ENCODE measurements at regions of chr16 and their contacts with region 1.

Region 1: GRCh38 chr16:53130159-53131049 is 75.6 kb downstream of the CHD9 start:
- DNase-seq: peak; percentile 99
- H3K4me3 ChIP-seq: peak overlapping the region; percentile 68 to 83
- H3K27ac ChIP-seq: peak overlapping the region; percentile 86 to 91
- H3K4me1 ChIP-seq: peaks cover 9 to 14% of the 10 kb centered on the region in 2 experiments; a peak in 3 of 4 replicates
- H3K27me3 ChIP-seq: no peaks in the 10 kb centered on the region
- CTCF ChIP-seq: no peak; the same call in 1 of the 2 replicates
- EP300 ChIP-seq: no peak
- RAD21 ChIP-seq: peak; percentile 70

Region 2: DNA sequence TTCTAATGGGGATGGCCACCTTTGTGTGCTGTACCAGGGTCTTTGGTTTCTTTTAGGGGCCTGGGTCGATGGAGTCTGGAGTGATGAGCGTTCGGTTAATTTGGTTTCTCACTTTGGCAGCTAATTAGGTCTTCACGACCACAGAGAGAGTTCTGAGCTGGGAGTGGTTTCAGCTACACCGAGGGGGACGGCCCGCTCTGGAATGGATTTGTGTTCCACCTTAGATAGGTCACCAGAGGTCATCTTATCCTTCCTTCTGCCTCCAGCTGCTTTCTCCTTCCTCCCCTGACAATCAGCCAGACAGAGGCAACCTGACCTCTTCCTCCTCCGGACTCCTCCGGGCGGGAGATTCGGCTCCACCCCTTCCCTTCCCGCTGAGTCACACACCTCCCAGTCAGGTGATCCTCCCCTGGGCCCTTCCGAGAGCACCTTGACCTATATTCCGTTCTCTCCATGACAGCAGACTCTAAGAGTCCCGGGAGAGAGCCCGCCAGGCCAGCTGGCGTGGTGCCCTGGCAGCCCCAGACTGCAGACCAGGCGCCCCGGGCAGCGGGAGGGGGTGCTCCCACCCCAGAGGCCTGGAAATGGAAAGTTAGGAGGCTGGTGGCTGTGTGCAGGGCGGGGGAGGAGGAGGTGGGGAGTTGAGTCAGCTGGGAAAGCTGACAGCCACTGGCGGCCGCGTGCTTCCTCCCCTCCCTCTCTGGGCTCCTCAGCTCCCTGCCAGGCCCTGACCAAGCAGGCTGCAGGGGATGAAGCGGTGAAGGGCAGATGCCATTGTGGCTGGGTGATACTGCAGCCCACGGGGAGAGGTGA is 30.9 kb before region 1 on chr16:
- CTCF ChIA-PET with region 1: interaction called, 10 read pairs
- POLR2A ChIA-PET with region 1: interaction called, 16 read pairs
- DNase-seq: peak; percentile 89
- H3K4me3 ChIP-seq: peak overlapping the region; percentile 36 to 61
- H3K27ac ChIP-seq: peak overlapping the region; percentile 99
- H3K4me1 ChIP-seq: peaks cover 17 to 25% of the 10 kb centered on the region in 2 experiments
- H3K27me3 ChIP-seq: no peaks in the 10 kb centered on the region
- CTCF ChIP-seq: no peak
- EP300 ChIP-seq: peak; percentile 76 to 84
- RAD21 ChIP-seq: peak; percentile 27; the same call in 1 of the 2 replicates

Region 3: DNA sequence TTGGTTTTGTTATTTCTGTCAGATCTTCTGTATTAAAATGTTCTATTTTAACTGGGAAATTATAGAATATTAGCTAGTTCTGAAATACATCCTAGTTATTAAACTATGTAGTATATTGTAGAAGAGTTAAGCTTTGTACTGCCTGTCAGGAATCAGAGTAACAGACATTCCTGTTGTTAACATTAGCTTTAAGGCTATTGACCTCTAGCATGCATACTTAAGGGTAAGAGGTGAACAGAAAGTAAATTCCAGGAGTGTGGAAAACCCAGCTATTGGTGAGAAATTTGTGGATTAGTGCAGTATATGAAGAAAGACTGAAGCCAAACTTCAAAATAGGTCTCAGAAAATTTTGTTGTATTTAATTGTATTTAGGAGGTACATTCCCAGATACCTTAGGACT is 35.7 kb after region 1 on chr16:
- CTCF ChIA-PET with region 1: no interaction called
- POLR2A ChIA-PET with region 1: no interaction called
- DNase-seq: no peak
- H3K4me3 ChIP-seq: no peak overlapping the region
- H3K27ac ChIP-seq: peak overlapping the region in 1 of 2 experiments; percentile 23; a peak in 1 of 4 replicates
- H3K4me1 ChIP-seq: peaks cover 0 to 22% of the 10 kb centered on the region in 2 experiments; a peak in 2 of 4 replicates
- H3K27me3 ChIP-seq: no peaks in the 10 kb centered on the region
- CTCF ChIP-seq: no peak
- EP300 ChIP-seq: no peak
- RAD21 ChIP-seq: no peak

Region 4: GRCh38 chr16:53207810-53208752 is 77.7 kb after region 1 on chr16:
- CTCF ChIA-PET with region 1: interaction called, 10 read pairs
- POLR2A ChIA-PET with region 1: no interaction called
- DNase-seq: peak; percentile 77
- H3K4me3 ChIP-seq: peak overlapping the region; percentile 52 to 69
- H3K27ac ChIP-seq: peak overlapping the region; percentile 93 to 97
- H3K4me1 ChIP-seq: peaks cover 7 to 17% of the 10 kb centered on the region in 2 experiments; a peak in 2 of 4 replicates
- H3K27me3 ChIP-seq: no peaks in the 10 kb centered on the region
- CTCF ChIP-seq: peak; percentile 73
- EP300 ChIP-seq: peak in 1 of 2 experiments; percentile 25; a peak in 1 of 4 replicates
- RAD21 ChIP-seq: peak; percentile 75